HEK293 (cell line): ENCODE measurements at regions of chr11 and their contacts with region 1.

Region 1: DNA sequence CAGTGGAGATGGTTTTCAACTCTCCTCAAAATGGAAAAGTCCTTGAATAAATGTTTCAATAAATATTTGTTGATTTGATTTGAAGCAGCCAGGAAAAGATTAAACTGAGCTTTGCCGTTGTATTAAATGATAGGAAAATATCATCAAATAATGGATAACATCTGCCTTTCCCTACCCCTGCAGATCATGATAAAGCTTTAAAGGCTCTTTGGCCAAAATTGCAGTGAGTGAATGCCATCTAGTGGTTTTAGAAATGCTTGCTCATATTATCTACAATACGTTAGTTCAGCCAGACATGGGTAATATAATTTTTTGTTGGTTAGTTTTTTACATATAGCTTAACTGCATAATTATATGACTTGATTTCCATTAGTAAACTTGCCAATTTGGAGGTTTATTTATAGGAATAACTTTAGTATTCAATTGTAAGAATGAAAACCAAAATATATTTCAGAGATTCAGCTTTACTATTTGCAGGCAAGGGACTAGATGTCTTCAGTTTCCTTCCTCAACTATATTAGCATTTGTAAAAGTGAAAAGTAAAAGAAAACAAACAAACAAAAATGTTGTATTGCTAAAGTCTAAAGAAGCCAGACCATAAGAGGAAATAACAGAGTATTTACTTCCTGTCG is 159.2 kb downstream of the MSANTD4 start:
- H3K4me3 ChIP-seq: no peak overlapping the region
- H3K27ac ChIP-seq: no peak overlapping the region
- H3K4me1 ChIP-seq: no peaks in the 10 kb centered on the region
- CTCF ChIP-seq: no peak

Region 2: GRCh38 chr11:105265859-105266258 is 597.0 kb before region 1 on chr11:
- CTCF ChIA-PET with region 1: no interaction called
- POLR2A ChIA-PET with region 1: no interaction called
- H3K4me3 ChIP-seq: no peak overlapping the region
- H3K27ac ChIP-seq: no peak overlapping the region
- H3K4me1 ChIP-seq: no peaks in the 10 kb centered on the region
- CTCF ChIP-seq: no peak

Region 3: DNA sequence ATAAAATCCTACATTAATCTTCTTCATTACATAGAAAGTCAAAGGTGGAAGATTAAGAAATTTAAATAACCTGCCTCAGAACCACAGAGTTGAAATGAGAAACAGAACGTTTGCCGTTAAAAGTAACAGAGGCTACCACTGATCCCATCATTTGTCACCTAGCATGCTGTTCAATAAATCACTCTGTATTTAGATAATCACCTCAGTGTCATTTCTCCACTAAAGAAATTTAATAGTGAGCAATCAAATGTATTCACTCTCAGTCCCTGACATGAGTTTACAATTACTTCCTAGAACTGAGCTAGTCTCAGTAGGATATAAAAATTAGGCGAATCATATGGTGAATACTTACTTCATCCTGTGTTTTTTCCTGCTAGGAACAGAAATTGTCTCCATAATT is 10.4 kb before region 1 on chr11:
- CTCF ChIA-PET with region 1: interaction called, 18 read pairs
- POLR2A ChIA-PET with region 1: no interaction called
- H3K4me3 ChIP-seq: no peak overlapping the region
- H3K27ac ChIP-seq: no peak overlapping the region
- H3K4me1 ChIP-seq: no peaks in the 10 kb centered on the region
- CTCF ChIP-seq: no peak